ENCODE measurements at regions of chr5 and their contacts with region 1.

Region 1: DNA sequence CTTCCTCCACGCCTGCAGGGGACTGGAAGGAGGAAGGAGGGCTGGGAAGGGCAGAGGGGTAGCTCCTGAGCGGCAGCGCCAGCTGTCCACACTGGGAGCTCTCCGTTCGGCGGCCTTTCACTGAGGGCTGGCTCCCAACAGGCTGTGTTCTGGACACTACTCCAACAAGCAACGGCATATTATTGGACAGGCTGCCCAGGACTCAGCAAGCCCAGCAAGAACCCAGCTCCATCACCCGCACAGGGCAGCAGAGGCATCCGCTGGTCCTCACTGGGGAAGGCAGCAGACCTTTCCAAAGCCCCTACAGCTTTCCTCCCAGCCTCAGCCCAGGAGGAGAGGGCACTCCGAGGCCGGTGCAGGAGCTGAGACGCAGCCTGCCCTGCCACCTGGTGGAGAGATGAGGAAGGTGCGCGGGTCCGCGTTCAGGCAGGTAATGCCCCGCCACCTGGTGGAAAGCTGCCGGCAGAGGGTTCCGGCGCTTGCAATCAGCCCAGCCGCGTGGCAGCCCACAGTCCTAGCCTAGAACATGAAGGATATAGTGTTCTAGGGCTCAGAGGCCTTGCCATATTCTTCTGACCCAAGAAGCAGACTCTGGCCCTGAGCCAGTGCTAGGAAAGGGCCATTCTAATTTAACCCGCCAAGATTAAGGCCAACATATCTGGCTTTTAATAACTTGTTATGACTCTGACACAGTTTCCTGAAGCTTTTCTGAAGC is 74.4 kb downstream of the NRG2 start:
- DNase-seq: peak; percentile 88 to 91
- ATAC-seq: peak; percentile 97 to 100 (median 100)
- H3K4me3 ChIP-seq: no peak overlapping the region
- H3K4me3 Mint-ChIP-seq: no peak overlapping the region
- H3K27ac ChIP-seq: no peak overlapping the region
- H3K27ac Mint-ChIP-seq: no peak overlapping the region
- H3K4me1 ChIP-seq: peaks cover 3% of the 10 kb centered on the region
- H3K4me1 Mint-ChIP-seq: no peaks in the 10 kb centered on the region
- H3K27me3 ChIP-seq: peaks cover 9% of the 10 kb centered on the region
- H3K27me3 Mint-ChIP-seq: peaks cover 9 to 28% of the 10 kb centered on the region in 2 donors
- CTCF ChIP-seq: peak; percentile 100

Region 2: GRCh38 chr5:139863855-139864558 is 104.7 kb before region 1 on chr5:
- intact Hi-C with region 1: loop called (anchors 1 kb)
- DNase-seq: peak; percentile 59 to 76
- ATAC-seq: peak; percentile 66 to 93 (median 91)
- H3K4me3 ChIP-seq: no peak overlapping the region
- H3K4me3 Mint-ChIP-seq: no peak overlapping the region
- H3K27ac ChIP-seq: no peak overlapping the region
- H3K27ac Mint-ChIP-seq: no peak overlapping the region
- H3K4me1 ChIP-seq: no peaks in the 10 kb centered on the region
- H3K4me1 Mint-ChIP-seq: peaks cover 0 to 4% of the 10 kb centered on the region in 2 donors
- H3K27me3 ChIP-seq: no peaks in the 10 kb centered on the region
- H3K27me3 Mint-ChIP-seq: peaks cover 0 to 8% of the 10 kb centered on the region in 2 donors
- CTCF ChIP-seq: peak; percentile 88

Region 3: DNA sequence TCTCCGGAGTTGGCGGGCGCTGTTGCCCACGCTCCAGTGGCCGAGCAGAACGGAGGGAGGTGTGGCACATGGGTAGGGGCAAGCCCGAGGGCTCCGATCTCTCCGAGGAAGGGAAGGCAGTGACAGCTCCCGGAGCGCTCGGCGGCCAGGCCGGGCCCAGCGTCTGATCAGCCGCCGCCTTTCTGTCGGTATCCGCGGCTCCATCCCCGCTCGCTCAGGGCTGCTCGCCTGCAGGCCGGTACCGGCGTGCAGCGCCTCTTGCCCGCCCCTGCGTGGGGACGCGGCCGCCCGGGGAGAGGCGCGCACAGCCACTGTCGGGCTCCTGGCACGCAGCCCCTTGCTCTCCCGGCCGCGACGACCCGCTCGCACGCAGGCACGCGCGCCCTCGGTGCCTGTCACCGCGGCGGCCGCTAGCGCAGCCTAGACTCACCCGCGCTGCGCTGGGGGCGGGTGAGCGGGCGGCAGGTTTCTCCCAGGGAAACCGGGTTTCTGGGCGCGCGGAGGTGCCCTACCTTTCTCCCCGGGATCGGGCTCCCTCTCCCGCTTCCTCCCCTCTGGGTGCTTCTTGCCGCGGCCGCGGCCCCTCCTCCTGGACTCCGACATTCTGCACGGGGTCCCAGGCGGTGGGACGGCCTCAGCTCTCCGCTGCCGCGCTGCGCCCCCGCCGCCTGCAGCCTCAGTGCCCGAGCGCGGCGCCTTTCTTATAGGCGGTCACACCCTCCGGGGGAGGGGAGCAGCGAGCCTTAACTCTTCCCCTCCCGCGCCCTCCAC is 64.7 kb before region 1 on chr5:
- intact Hi-C with region 1: loop called (anchors 5 kb)
- DNase-seq: peak in 1 of 2 donors; percentile 15
- ATAC-seq: peak; percentile 31 to 79 (median 78)
- H3K4me3 ChIP-seq: no peak overlapping the region
- H3K4me3 Mint-ChIP-seq: peak overlapping the region; percentile 68
- H3K27ac ChIP-seq: no peak overlapping the region
- H3K27ac Mint-ChIP-seq: no peak overlapping the region
- H3K4me1 ChIP-seq: peaks cover 21% of the 10 kb centered on the region
- H3K4me1 Mint-ChIP-seq: peaks cover 12 to 17% of the 10 kb centered on the region in 2 donors
- H3K27me3 ChIP-seq: peaks cover 22% of the 10 kb centered on the region
- H3K27me3 Mint-ChIP-seq: peaks cover 26% of the 10 kb centered on the region in 2 donors
- CTCF ChIP-seq: no peak

Region 4: GRCh38 chr5:139925650-139926640 is 42.8 kb before region 1 on chr5:
- intact Hi-C with region 1: no loop called
- DNase-seq: peak; percentile 54 to 59
- ATAC-seq: peak; percentile 90 to 94 (median 94)
- H3K4me3 ChIP-seq: no peak overlapping the region
- H3K4me3 Mint-ChIP-seq: peak overlapping the region; percentile 72
- H3K27ac ChIP-seq: peak overlapping the region; percentile 63
- H3K27ac Mint-ChIP-seq: peak overlapping the region; percentile 84 to 94
- H3K4me1 ChIP-seq: peaks cover 39% of the 10 kb centered on the region
- H3K4me1 Mint-ChIP-seq: peaks cover 43 to 48% of the 10 kb centered on the region in 2 donors
- H3K27me3 ChIP-seq: peaks cover 1% of the 10 kb centered on the region
- H3K27me3 Mint-ChIP-seq: peaks cover 2 to 7% of the 10 kb centered on the region in 2 donors
- CTCF ChIP-seq: no peak

Region 5: GRCh38 chr5:140011297-140011802 is 42.6 kb after region 1 on chr5:
- intact Hi-C with region 1: no loop called
- DNase-seq: no peak
- ATAC-seq: no peak
- H3K4me3 ChIP-seq: no peak overlapping the region
- H3K4me3 Mint-ChIP-seq: no peak overlapping the region
- H3K27ac ChIP-seq: no peak overlapping the region
- H3K27ac Mint-ChIP-seq: no peak overlapping the region
- H3K4me1 ChIP-seq: no peaks in the 10 kb centered on the region
- H3K4me1 Mint-ChIP-seq: no peaks in the 10 kb centered on the region
- H3K27me3 ChIP-seq: peaks cover 2% of the 10 kb centered on the region
- H3K27me3 Mint-ChIP-seq: peaks cover 4 to 5% of the 10 kb centered on the region in 2 donors
- CTCF ChIP-seq: no peak

Region 6: DNA sequence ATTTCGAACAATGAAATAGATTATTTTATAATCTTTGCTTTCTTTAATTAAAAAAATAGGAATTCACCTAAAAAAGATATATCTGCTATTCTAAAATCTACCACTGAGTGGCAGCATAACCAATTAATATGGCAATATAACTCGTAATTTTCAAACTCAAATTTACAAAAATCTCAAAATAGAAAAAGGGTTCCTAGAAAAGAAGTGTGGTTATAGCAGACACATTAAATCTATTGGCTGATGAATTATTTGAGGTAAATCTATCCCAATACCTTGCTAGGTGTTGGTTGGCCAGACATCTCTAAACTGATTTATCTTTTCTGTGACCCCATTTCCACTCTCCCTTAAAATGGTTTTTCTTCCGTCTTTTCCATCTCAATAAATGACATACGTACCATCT is 104.6 kb after region 1 on chr5:
- intact Hi-C with region 1: no loop called
- DNase-seq: peak in 1 of 2 donors; percentile 70
- ATAC-seq: no peak
- H3K4me3 ChIP-seq: no peak overlapping the region
- H3K4me3 Mint-ChIP-seq: no peak overlapping the region
- H3K27ac ChIP-seq: no peak overlapping the region
- H3K27ac Mint-ChIP-seq: no peak overlapping the region
- H3K4me1 ChIP-seq: no peaks in the 10 kb centered on the region
- H3K4me1 Mint-ChIP-seq: no peaks in the 10 kb centered on the region
- H3K27me3 ChIP-seq: peaks cover 7% of the 10 kb centered on the region
- H3K27me3 Mint-ChIP-seq: peaks cover 16 to 42% of the 10 kb centered on the region in 2 donors
- CTCF ChIP-seq: peak; percentile 93

Region 7: GRCh38 chr5:140084541-140084940 is 115.8 kb after region 1 on chr5:
- intact Hi-C with region 1: no loop called
- DNase-seq: no peak
- ATAC-seq: no peak
- H3K4me3 ChIP-seq: no peak overlapping the region
- H3K4me3 Mint-ChIP-seq: no peak overlapping the region
- H3K27ac ChIP-seq: no peak overlapping the region
- H3K27ac Mint-ChIP-seq: no peak overlapping the region
- H3K4me1 ChIP-seq: no peaks in the 10 kb centered on the region
- H3K4me1 Mint-ChIP-seq: no peaks in the 10 kb centered on the region
- H3K27me3 ChIP-seq: peaks cover 10% of the 10 kb centered on the region
- H3K27me3 Mint-ChIP-seq: peaks cover 31 to 64% of the 10 kb centered on the region in 2 donors
- CTCF ChIP-seq: no peak

Region 8: DNA sequence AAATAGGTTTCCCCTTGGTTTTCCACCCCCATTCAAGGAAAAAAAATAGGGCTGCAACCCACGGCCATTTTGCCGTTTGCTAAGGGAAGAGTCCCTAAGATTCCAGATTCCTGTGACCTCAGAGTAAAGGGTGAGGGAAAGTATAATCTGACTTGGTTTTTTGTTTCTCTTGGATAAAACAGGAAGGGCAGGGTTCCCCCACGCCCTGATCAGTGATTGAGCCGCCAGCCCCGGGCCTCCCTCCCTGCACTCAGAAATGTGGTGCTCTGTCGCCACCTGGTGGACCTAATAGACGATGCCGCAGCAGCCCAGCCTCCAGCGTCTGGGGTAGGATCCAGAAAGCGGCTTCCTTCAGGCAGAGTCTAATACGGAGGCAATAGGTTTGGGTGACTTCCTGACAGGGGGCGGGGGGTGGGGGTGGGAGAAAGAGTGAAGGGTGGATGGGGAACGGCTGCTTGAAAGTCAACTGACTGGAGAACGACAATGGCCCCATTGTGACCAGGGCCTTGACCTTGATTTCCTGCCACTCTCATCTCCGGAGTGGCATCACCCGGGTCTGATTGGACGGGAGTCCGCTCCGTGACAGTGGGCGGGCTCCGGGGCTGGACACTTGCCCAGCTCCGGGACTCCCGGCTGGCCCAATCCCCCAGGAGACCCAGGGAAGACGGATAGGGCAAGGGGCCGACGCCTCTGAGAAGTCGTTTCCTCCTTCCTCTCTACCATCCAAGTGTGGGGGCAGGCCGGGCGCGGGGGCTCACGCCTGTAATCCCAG is 188.5 kb after region 1 on chr5:
- intact Hi-C with region 1: loop called (anchors 2 kb)
- DNase-seq: peak; percentile 83 to 94
- ATAC-seq: peak; percentile 96 to 100 (median 99)
- H3K4me3 ChIP-seq: no peak overlapping the region
- H3K4me3 Mint-ChIP-seq: peak overlapping the region; percentile 13
- H3K27ac ChIP-seq: no peak overlapping the region
- H3K27ac Mint-ChIP-seq: peak overlapping the region in 1 of 2 donors; percentile 31
- H3K4me1 ChIP-seq: peaks cover 14% of the 10 kb centered on the region
- H3K4me1 Mint-ChIP-seq: peaks cover 0 to 7% of the 10 kb centered on the region in 2 donors
- H3K27me3 ChIP-seq: no peaks in the 10 kb centered on the region
- H3K27me3 Mint-ChIP-seq: peaks cover 0 to under 1% of the 10 kb centered on the region in 2 donors
- CTCF ChIP-seq: peak; percentile 81

Measured in natural killer cell (primary cell).